Activated CD4-positive, alpha-beta T cell treated with anti-CD3 and anti-CD28 coated beads, Interleukin-2, amount 10 ng/mL, durations not matched to agents 24 days and 14 days (primary cell): ENCODE measurements at regions of chr11 and their contacts with region 1.

Region 1: DNA sequence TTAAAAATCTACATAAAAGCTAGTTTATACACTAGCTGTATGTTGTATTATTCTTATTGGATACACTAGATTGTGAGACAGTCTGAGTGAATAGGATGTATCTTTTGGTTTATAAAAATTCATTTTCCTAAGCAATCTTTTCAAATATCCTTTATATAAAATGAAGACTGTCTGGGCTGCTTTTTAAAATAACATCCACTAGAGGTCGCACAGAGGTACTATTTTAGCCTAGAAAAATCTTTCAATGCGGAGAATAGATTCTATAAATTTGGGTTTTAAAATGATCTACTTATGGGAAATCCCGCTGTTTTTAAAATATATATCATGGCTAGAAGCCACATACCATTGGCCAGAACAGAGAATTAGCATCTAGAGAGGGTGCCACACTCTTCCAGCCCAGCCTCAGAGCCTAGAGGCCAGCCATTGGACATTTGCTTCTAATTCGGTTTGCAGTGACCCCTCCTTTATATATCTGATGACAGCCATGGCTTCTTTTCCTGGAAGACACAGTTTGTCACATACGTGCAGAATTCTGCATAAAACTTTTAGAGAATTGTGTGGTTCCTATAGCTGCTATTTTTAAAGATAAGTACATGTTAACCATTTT is 7.3 kb downstream of the C11orf97 start:
- DNase-seq: peak; percentile 67
- H3K4me3 Mint-ChIP-seq: no peak overlapping the region
- H3K27ac Mint-ChIP-seq: no peak overlapping the region
- H3K4me1 Mint-ChIP-seq: no peaks in the 10 kb centered on the region
- H3K27me3 Mint-ChIP-seq: peaks cover 31% of the 10 kb centered on the region

Region 2: DNA sequence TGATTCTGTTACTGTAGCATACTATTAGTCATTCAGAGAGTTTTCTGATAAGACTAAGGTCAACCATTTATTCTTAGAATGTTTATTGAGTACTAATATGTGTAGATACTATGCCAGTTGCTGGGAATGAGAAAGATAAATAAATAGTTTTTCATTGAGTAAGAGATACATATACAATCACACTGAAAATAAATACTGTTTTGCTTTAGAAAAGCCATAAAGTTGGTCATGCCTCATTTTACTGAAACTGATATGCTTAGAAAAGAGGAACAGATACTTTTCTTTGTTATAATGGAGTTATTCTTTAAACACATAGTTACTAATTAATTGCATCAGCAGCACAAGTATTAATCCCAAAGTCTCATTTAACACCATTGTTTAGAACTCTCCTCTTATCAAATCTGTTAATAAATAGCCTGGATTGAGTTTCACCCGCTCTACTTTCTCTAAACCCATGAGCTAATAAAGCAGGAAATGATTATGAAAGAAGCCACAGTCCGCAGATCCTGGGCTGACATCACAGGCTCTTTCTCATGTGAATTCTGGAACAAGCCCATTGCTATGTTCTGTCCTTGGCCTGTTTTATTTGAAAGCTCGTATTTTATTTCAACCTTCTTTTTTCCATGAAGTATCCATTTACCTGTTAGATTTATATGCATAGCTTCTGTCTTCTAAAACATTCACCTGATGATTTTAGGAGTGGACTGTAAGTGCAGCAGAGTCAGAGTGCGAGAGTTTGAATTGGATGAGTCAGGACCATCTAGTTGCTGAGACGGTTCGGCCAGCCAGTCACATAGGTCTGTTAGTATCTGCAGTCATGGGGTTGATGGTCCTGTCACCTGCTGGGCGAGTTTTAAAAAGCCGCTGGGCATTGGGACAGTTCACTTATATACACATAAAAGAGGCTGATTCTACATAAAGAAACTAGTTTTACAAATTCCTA is 83.1 kb after region 1 on chr11:
- intact Hi-C with region 1: loop called (anchors 1 kb)
- DNase-seq: peak; percentile 80
- H3K4me3 Mint-ChIP-seq: no peak overlapping the region
- H3K27ac Mint-ChIP-seq: no peak overlapping the region
- H3K4me1 Mint-ChIP-seq: no peaks in the 10 kb centered on the region
- H3K27me3 Mint-ChIP-seq: peaks cover 4% of the 10 kb centered on the region